Transverse colon (tissue), 4 donors: ENCODE measurements at regions of chr17 and their contacts with region 1.

Region 1: GRCh38 chr17:14098224-14098623 is 28.9 kb downstream of the COX10 start:
- DNase-seq: no peak
- H3K4me3 ChIP-seq: no peak overlapping the region
- H3K27ac ChIP-seq: no peak overlapping the region
- H3K4me1 ChIP-seq: peaks cover 0 to 17% (median 10%) of the 10 kb centered on the region in 4 donors
- H3K27me3 ChIP-seq: no peaks in the 10 kb centered on the region
- CTCF ChIP-seq: no peak
- EP300 ChIP-seq: no peak
- POLR2A ChIP-seq: no peak

Region 2: GRCh38 chr17:14080847-14081251 is 17.4 kb before region 1 on chr17:
- in situ Hi-C with region 1: no loop called
- intact Hi-C with region 1: loop called (anchors 1 kb)
- DNase-seq: peak; percentile 36
- H3K4me3 ChIP-seq: no peak overlapping the region
- H3K27ac ChIP-seq: peak overlapping the region in 1 of 4 donors; percentile 1
- H3K4me1 ChIP-seq: peaks cover 0 to 23% (median 8%) of the 10 kb centered on the region in 4 donors
- H3K27me3 ChIP-seq: no peaks in the 10 kb centered on the region
- CTCF ChIP-seq: no peak
- EP300 ChIP-seq: no peak
- POLR2A ChIP-seq: no peak